CD8-positive, alpha-beta T cell (primary cell): ENCODE measurements at regions of chr2 and their contacts with region 1.

Region 1: GRCh38 chr2:215241791-215242305 is 70.0 kb upstream of the ATIC start:
- DNase-seq: no peak
- ATAC-seq: no peak
- H3K4me3 ChIP-seq: no peak overlapping the region
- H3K4me3 Mint-ChIP-seq: no peak overlapping the region
- H3K27ac ChIP-seq: no peak overlapping the region
- H3K27ac Mint-ChIP-seq: no peak overlapping the region
- H3K4me1 ChIP-seq: no peaks in the 10 kb centered on the region
- H3K4me1 Mint-ChIP-seq: no peaks in the 10 kb centered on the region
- H3K27me3 ChIP-seq: no peaks in the 10 kb centered on the region
- H3K27me3 Mint-ChIP-seq: peaks cover 7% of the 10 kb centered on the region
- CTCF ChIP-seq: no peak

Region 2: GRCh38 chr2:213834331-213834730 is 1407.5 kb before region 1 on chr2:
- CTCF ChIA-PET with region 1: no interaction called
- POLR2A ChIA-PET with region 1: no interaction called
- intact Hi-C with region 1: loop called in 1 of 2 experiments (anchors 10 kb)
- DNase-seq: no peak
- ATAC-seq: no peak
- H3K4me3 ChIP-seq: no peak overlapping the region
- H3K4me3 Mint-ChIP-seq: no peak overlapping the region
- H3K27ac ChIP-seq: no peak overlapping the region
- H3K27ac Mint-ChIP-seq: no peak overlapping the region
- H3K4me1 ChIP-seq: no peaks in the 10 kb centered on the region
- H3K4me1 Mint-ChIP-seq: no peaks in the 10 kb centered on the region
- H3K27me3 ChIP-seq: no peaks in the 10 kb centered on the region
- H3K27me3 Mint-ChIP-seq: peaks cover 3% of the 10 kb centered on the region
- CTCF ChIP-seq: no peak

Region 3: DNA sequence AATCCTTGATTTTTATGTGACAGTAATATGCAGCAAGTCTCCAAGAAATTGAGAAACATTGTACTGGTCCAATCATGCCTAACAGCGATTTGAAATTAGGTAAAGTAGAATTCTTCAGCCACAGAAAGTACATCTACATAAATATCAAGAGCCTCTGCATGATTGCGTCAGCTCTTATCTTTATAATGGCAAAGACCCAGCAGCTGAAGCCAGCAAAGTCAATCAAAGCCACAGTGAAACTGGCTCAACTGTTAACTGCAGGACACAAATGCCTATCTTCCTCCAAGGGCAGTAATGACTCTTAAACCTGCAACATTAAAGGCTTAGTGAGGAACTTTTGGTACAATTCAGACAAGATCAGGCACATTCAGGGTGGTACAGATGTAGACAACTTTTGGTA is 534.9 kb before region 1 on chr2:
- CTCF ChIA-PET with region 1: no interaction called
- POLR2A ChIA-PET with region 1: no interaction called
- intact Hi-C with region 1: no loop called
- DNase-seq: no peak
- ATAC-seq: no peak
- H3K4me3 ChIP-seq: no peak overlapping the region
- H3K4me3 Mint-ChIP-seq: no peak overlapping the region
- H3K27ac ChIP-seq: no peak overlapping the region
- H3K27ac Mint-ChIP-seq: no peak overlapping the region
- H3K4me1 ChIP-seq: no peaks in the 10 kb centered on the region
- H3K4me1 Mint-ChIP-seq: peaks cover 2% of the 10 kb centered on the region
- H3K27me3 ChIP-seq: no peaks in the 10 kb centered on the region
- H3K27me3 Mint-ChIP-seq: no peaks in the 10 kb centered on the region
- CTCF ChIP-seq: no peak

Region 4: GRCh38 chr2:215105608-215106354 is 136.1 kb before region 1 on chr2:
- CTCF ChIA-PET with region 1: no interaction called
- POLR2A ChIA-PET with region 1: no interaction called
- intact Hi-C with region 1: no loop called
- DNase-seq: no peak
- ATAC-seq: no peak
- H3K4me3 ChIP-seq: no peak overlapping the region
- H3K4me3 Mint-ChIP-seq: no peak overlapping the region
- H3K27ac ChIP-seq: no peak overlapping the region
- H3K27ac Mint-ChIP-seq: no peak overlapping the region
- H3K4me1 ChIP-seq: no peaks in the 10 kb centered on the region
- H3K4me1 Mint-ChIP-seq: no peaks in the 10 kb centered on the region
- H3K27me3 ChIP-seq: no peaks in the 10 kb centered on the region
- H3K27me3 Mint-ChIP-seq: peaks cover 2% of the 10 kb centered on the region
- CTCF ChIP-seq: no peak

Region 5: DNA sequence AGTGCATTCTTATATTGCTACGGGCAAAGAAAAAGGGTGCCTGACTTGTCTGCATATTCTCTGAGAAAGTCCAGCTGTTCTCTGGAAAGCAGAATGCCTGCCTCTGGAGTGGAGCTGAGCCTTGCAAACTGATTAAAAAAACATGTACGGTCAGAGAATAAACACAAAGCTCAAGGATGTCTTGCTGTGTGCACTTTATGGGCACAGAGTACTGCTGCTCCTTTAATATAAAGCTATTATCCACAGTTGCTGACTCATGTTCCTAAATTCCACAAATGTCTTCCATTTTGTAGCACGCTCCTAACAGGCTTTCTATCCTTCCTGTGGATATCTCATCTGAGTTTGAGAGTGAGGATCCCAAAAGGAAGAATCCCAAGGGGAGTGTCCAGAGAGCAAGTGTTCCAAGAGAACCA is 542.5 kb after region 1 on chr2:
- CTCF ChIA-PET with region 1: no interaction called
- POLR2A ChIA-PET with region 1: no interaction called
- intact Hi-C with region 1: no loop called
- DNase-seq: no peak
- ATAC-seq: no peak
- H3K4me3 ChIP-seq: no peak overlapping the region
- H3K4me3 Mint-ChIP-seq: no peak overlapping the region
- H3K27ac ChIP-seq: no peak overlapping the region
- H3K27ac Mint-ChIP-seq: no peak overlapping the region
- H3K4me1 ChIP-seq: no peaks in the 10 kb centered on the region
- H3K4me1 Mint-ChIP-seq: no peaks in the 10 kb centered on the region
- H3K27me3 ChIP-seq: no peaks in the 10 kb centered on the region
- H3K27me3 Mint-ChIP-seq: peaks cover 5% of the 10 kb centered on the region
- CTCF ChIP-seq: no peak

Region 6: GRCh38 chr2:217105733-217106649 is 1864.1 kb after region 1 on chr2:
- CTCF ChIA-PET with region 1: no interaction called
- POLR2A ChIA-PET with region 1: no interaction called
- intact Hi-C with region 1: no loop called
- DNase-seq: no peak
- ATAC-seq: no peak
- H3K4me3 ChIP-seq: no peak overlapping the region
- H3K4me3 Mint-ChIP-seq: no peak overlapping the region
- H3K27ac ChIP-seq: no peak overlapping the region
- H3K27ac Mint-ChIP-seq: no peak overlapping the region
- H3K4me1 ChIP-seq: no peaks in the 10 kb centered on the region
- H3K4me1 Mint-ChIP-seq: no peaks in the 10 kb centered on the region
- H3K27me3 ChIP-seq: no peaks in the 10 kb centered on the region
- H3K27me3 Mint-ChIP-seq: no peaks in the 10 kb centered on the region
- CTCF ChIP-seq: no peak